Activated naive CD4-positive, alpha-beta T cell treated with anti-CD3 and anti-CD28 coated beads for 36 hours (primary cell): ENCODE measurements at regions of chrX and their contacts with region 1.

Region 1: GRCh38 chrX:6021316-6022091 is 207.2 kb downstream of the NLGN4X start:
- DNase-seq: peak; percentile 41
- H3K4me3 Mint-ChIP-seq: no peak overlapping the region
- H3K27ac Mint-ChIP-seq: no peak overlapping the region
- H3K4me1 Mint-ChIP-seq: peaks cover 3% of the 10 kb centered on the region
- H3K27me3 Mint-ChIP-seq: peaks cover 3% of the 10 kb centered on the region

Region 2: DNA sequence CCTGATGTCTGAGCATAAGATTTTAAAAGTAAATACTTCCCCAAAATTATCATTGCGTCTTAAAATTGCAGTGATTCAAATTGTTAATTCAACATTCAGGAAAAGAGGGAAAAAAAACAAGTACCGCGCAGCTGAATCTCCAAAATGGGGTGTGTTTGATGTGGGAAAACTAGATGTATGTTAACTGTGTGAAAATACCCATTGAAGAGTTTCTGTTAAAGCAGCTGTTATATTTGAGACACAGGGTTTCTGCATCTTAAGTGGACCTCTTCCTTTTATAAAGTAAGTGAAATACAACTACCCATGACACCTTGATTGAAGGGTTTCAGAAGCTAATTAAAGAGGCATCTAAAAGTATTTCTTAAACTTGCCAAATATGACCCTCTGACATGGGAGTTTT is 978.9 kb before region 1 on chrX:
- CTCF ChIA-PET with region 1: no interaction called
- intact Hi-C with region 1: no loop called
- DNase-seq: no peak
- H3K4me3 Mint-ChIP-seq: no peak overlapping the region
- H3K27ac Mint-ChIP-seq: no peak overlapping the region
- H3K4me1 Mint-ChIP-seq: no peaks in the 10 kb centered on the region
- H3K27me3 Mint-ChIP-seq: no peaks in the 10 kb centered on the region

Region 3: GRCh38 chrX:5278908-5279307 is 742.6 kb before region 1 on chrX:
- CTCF ChIA-PET with region 1: no interaction called
- intact Hi-C with region 1: no loop called
- DNase-seq: no peak
- H3K4me3 Mint-ChIP-seq: no peak overlapping the region
- H3K27ac Mint-ChIP-seq: no peak overlapping the region
- H3K4me1 Mint-ChIP-seq: no peaks in the 10 kb centered on the region
- H3K27me3 Mint-ChIP-seq: no peaks in the 10 kb centered on the region

Region 4: DNA sequence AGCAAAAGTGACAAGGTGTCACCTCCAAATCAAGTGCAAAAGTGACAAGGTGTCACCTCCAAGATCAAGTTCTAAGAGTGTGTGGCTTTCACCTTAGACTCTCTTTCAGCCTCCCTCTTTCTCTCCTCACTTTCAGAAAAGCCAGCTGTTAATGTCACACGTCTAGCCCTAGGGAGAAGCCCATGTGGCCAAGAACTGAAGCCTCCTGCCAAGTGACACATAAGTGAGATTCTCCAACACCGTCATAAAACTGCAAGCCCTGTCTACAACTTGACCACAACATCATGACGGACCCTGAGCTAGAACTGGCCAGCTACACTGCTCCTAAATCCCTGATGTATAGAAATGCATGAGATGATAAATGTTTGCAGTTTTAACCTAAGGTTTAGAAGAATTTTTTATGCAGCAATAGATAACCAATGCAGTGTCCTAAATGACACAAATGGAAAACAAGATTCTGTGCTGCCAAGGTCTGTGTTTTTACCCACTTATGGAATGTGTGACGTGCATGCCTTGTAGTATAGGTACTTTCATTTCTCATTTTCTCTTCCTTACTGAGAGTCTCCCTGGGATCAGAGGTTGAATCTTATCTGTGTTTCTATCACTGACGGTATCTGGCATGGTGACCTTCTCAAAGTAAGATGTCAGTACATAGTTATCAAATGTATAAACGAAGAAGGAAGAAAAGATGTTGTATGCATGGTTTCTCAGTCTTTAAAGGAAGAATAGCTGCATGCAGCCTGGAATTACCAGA is 182.1 kb after region 1 on chrX:
- CTCF ChIA-PET with region 1: no interaction called
- intact Hi-C with region 1: no loop called
- DNase-seq: no peak
- H3K4me3 Mint-ChIP-seq: no peak overlapping the region
- H3K27ac Mint-ChIP-seq: no peak overlapping the region
- H3K4me1 Mint-ChIP-seq: no peaks in the 10 kb centered on the region
- H3K27me3 Mint-ChIP-seq: peaks cover 2% of the 10 kb centered on the region

Region 5: DNA sequence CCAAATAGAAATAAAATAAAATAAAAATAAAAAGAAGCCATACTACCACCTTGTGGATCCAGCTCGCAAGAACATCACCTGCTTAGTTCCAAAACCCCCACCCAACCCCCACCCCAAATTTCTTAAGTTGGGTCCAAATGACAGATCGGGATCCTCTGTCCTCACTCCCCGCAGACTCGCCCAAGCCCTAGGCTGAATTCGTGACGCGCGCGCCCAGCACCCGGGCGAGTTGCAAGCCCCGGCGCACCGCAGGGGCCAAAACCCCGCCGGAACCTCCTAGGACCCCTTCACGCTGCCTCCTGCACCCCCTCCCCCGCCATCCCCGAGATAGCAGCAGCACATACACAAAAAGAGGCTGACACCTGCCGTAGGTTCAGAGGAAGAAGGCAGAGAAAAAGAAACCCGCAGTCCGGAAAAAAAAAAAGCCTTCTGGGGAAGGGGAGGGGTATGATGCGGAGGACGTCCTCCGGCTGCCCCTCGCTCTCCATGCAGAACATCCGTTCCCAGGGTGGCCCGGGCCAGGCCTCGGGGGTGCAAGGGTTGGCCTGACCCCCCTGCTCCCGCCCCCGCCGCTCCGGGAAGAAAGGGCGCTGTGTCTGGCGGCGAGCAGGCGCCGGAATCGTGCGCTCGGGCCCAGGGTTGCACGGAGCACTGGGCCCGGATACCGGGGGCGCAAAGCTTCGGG is 204.5 kb after region 1 on chrX:
- CTCF ChIA-PET with region 1: no interaction called
- intact Hi-C with region 1: loop called (anchors 5 kb)
- DNase-seq: no peak
- H3K4me3 Mint-ChIP-seq: peak overlapping the region; percentile 21
- H3K27ac Mint-ChIP-seq: no peak overlapping the region
- H3K4me1 Mint-ChIP-seq: peaks cover 3% of the 10 kb centered on the region
- H3K27me3 Mint-ChIP-seq: peaks cover 25% of the 10 kb centered on the region

Region 6: DNA sequence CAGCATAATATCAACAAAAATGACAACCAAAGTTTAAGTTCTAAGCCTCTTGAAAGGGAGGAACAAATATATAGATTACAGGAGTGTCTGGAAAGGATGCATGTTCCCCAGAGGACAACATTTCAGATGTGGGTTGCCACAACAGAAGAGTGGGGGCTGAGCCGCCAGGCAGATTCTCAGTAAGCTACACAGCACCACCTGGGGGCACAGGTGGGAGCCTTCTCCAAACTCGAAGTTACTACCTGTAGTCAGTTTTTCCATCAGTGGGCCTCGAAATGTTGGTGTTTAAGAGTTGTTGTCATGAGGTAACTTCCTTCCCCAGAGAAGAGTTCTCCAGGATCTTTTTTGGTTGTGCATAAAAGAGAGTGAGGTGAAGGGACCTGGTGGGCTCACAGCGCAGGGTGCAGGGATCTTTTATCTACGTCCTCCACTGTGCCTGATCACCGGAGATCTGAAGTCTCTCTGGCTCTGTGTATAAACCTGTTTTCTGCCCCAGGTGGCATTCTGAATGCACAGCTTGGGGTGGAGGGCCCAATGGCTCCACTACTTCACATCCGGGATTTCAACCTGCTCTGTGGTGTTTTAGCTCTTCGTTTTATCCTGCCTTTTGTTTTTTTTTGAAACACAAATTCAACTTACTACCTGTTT is 1067.6 kb after region 1 on chrX:
- CTCF ChIA-PET with region 1: no interaction called
- intact Hi-C with region 1: loop called (anchors 5 kb)
- DNase-seq: peak; percentile 47
- H3K4me3 Mint-ChIP-seq: no peak overlapping the region
- H3K27ac Mint-ChIP-seq: peak overlapping the region; percentile 40
- H3K4me1 Mint-ChIP-seq: peaks cover 45% of the 10 kb centered on the region
- H3K27me3 Mint-ChIP-seq: no peaks in the 10 kb centered on the region